ENCODE measurements at regions of chr7 and their contacts with region 1.

Region 1: DNA sequence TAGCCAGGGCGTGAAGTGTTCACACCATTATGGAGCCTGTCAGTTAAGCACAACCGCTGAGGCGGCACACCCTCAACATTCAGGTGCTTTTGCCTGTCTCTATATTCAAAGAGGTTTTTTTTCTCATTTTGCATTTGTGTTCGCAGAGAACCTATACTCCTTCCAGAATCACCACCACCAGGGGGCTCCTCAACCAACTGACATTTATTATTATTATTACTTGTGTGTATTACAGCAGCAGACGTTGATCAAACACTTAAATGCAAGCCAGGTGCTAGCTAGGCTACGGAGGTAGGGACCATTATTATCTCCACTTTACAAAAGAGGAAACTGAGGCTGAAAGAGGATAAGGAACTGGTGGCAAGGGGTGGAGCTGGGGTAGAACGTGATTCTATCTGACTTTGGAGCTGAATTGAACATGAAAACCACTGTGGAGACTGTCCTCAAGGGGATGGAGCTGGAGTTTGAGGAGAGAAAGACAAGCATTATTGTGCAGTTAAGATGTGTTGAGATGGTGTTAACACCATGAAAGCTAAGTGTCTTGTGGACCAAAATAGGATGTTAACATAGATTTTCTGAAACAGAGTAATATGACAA is 133.8 kb upstream of the PLXNA4 start:
- DNase-seq: peak; percentile 53
- H3K4me3 ChIP-seq: no peak overlapping the region
- H3K27ac ChIP-seq: no peak overlapping the region
- H3K4me1 ChIP-seq: no peaks in the 10 kb centered on the region
- H3K27me3 ChIP-seq: peaks cover 6% of the 10 kb centered on the region
- CTCF ChIP-seq: peak; percentile 74

Region 2: GRCh38 chr7:131664570-131664969 is 1045.5 kb before region 1 on chr7:
- CTCF ChIA-PET with region 1: no interaction called
- POLR2A ChIA-PET with region 1: no interaction called
- intact Hi-C with region 1: no loop called
- DNase-seq: no peak
- H3K4me3 ChIP-seq: no peak overlapping the region
- H3K27ac ChIP-seq: no peak overlapping the region
- H3K4me1 ChIP-seq: peaks cover 5% of the 10 kb centered on the region
- H3K27me3 ChIP-seq: peaks cover 2% of the 10 kb centered on the region
- CTCF ChIP-seq: no peak

Region 3: GRCh38 chr7:133230591-133231194 is 520.6 kb after region 1 on chr7:
- CTCF ChIA-PET with region 1: no interaction called
- POLR2A ChIA-PET with region 1: no interaction called
- intact Hi-C with region 1: loop called (anchors 2 kb)
- DNase-seq: peak; percentile 70
- H3K4me3 ChIP-seq: no peak overlapping the region
- H3K27ac ChIP-seq: no peak overlapping the region
- H3K4me1 ChIP-seq: no peaks in the 10 kb centered on the region
- H3K27me3 ChIP-seq: peaks cover 12% of the 10 kb centered on the region
- CTCF ChIP-seq: peak; percentile 89

Region 4: DNA sequence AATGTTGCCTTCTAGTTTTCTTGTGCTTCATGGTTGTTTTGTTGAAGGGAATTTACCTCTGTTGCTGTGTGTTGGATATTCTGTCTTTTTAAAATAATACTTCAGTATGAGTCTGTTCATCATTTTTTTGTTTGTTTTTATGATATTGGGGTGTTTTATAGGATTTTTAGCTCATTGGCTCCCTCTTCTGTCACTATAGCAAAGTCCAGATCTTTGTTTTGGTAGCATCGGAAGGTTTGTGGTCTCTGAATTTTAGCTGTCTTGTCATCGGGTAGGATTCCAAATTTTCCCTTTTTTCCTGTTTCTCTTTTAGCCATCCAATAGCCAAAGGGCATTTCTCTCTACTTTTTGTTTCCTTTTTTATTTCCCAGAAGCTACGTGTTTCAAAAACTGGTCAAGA is 634.2 kb after region 1 on chr7:
- CTCF ChIA-PET with region 1: interaction called, 3 read pairs
- POLR2A ChIA-PET with region 1: no interaction called
- intact Hi-C with region 1: loop called (anchors 10 kb)
- DNase-seq: peak; percentile 17
- H3K4me3 ChIP-seq: no peak overlapping the region
- H3K27ac ChIP-seq: no peak overlapping the region
- H3K4me1 ChIP-seq: no peaks in the 10 kb centered on the region
- H3K27me3 ChIP-seq: no peaks in the 10 kb centered on the region
- CTCF ChIP-seq: peak; percentile 65

Region 5: GRCh38 chr7:134016223-134016941 is 1306.3 kb after region 1 on chr7:
- CTCF ChIA-PET with region 1: no interaction called
- POLR2A ChIA-PET with region 1: no interaction called
- intact Hi-C with region 1: loop called (anchors 10 kb)
- DNase-seq: peak; percentile 25
- H3K4me3 ChIP-seq: no peak overlapping the region
- H3K27ac ChIP-seq: no peak overlapping the region
- H3K4me1 ChIP-seq: no peaks in the 10 kb centered on the region
- H3K27me3 ChIP-seq: no peaks in the 10 kb centered on the region
- CTCF ChIP-seq: peak; percentile 72